ENCODE measurements at regions of chr5 and their contacts with region 1.

Region 1: DNA sequence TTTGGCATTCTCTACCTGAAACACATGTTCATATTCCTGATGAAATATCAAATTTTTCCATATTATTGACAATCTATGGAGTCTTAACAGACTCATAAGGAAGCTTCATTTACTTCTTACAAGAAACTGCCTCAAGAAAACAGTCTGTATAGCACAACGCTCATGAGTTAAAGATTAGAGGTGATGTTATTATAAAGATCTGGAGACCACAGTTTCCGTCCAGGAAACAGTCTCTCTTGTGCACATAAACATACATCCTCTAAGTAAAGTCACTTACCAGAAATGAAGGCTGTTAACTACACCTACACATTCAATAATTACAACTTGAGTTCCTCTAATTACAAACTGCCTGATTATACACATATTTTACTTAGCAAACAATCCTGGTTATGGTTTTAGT is 86.9 kb downstream of the RAPGEF6 start:
- DNase-seq: peak in 4 of 10 donors; percentile 42 to 77 (median 62)
- ATAC-seq: peak; percentile 95 to 99
- H3K4me3 Mint-ChIP-seq: peak overlapping the region; percentile 89 to 100 (median 96)
- H3K27ac Mint-ChIP-seq: peak overlapping the region; percentile 91 to 99 (median 97)
- H3K4me1 Mint-ChIP-seq: peaks cover 32 to 72% (median 67%) of the 10 kb centered on the region in 4 donors
- H3K27me3 Mint-ChIP-seq: no peaks in the 10 kb centered on the region

Region 2: DNA sequence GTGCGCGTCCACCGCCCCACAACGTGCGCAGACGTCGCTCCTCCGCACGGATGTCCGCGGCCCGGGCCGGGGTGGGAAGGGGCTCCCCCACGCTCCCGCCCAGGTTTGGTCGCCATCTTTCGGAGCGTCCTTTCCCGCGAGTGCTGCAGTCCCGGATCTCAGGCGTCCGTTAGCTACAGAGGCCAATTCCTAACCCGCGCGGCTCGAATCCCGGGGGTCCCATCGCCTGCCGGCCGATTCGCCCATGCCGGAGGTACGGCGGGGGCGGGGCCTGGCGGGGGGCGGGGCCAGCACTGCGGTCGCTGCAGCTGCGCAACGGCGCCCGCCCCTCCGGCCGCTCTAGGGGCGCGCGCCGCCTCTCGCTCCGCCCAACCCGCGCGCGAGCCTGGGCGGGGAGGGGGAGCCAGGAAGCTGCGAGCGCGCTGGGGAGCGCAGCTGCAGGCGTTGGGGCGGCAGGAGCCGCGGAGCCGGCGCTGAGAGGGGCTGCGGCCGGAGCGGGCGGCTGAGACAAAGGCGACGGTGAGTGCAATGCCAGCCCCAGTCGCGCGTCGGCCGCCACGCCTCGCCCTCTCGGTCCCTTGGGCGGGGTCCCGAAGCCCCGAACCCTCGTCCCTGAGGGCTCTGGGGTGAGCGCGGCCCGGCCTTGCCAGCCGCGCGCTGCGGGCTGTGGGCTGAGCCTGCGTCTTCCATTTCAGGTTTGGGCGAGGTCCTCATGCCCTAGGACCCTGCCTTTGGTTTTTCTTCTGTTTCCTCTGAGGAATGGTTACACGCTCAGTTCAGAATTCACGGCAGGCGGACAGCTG is 284.3 kb before region 1 on chr5 and contains the start of gene CDC42SE2:
- POLR2A ChIA-PET with region 1: no interaction called
- DNase-seq: peak; percentile 81 to 92 (median 88)
- ATAC-seq: peak; percentile 78 to 84
- H3K4me3 Mint-ChIP-seq: peak within 1 kb of the TSS; percentile 79 to 98 (median 91)
- H3K27ac Mint-ChIP-seq: peak within 1 kb of the TSS; percentile 93 to 98 (median 96)
- H3K4me1 Mint-ChIP-seq: peaks cover 11 to 64% (median 39%) of the 10 kb centered on the region in 4 donors
- H3K27me3 Mint-ChIP-seq: no peaks in the 10 kb centered on the region
- polyA plus RNA-seq, gene CDC42SE2: 423 to 544 (median 480) TPM

Region 3: GRCh38 chr5:131475541-131475941 is 72.6 kb before region 1 on chr5:
- POLR2A ChIA-PET with region 1: no interaction called
- DNase-seq: no peak
- ATAC-seq: no peak
- H3K4me3 Mint-ChIP-seq: no peak overlapping the region
- H3K27ac Mint-ChIP-seq: peak overlapping the region in 5 of 10 donors; percentile 32 to 79 (median 48)
- H3K4me1 Mint-ChIP-seq: peaks cover 8 to 50% (median 30%) of the 10 kb centered on the region in 4 donors
- H3K27me3 Mint-ChIP-seq: no peaks in the 10 kb centered on the region

Region 4: GRCh38 chr5:131533836-131534235 is 14.3 kb before region 1 on chr5:
- POLR2A ChIA-PET with region 1: interaction called, 17 read pairs
- DNase-seq: no peak
- ATAC-seq: peak; percentile 16 to 39
- H3K4me3 Mint-ChIP-seq: peak overlapping the region in 9 of 10 donors; percentile 7 to 86 (median 52)
- H3K27ac Mint-ChIP-seq: peak overlapping the region; percentile 49 to 98 (median 90)
- H3K4me1 Mint-ChIP-seq: peaks cover 31 to 93% (median 75%) of the 10 kb centered on the region in 4 donors
- H3K27me3 Mint-ChIP-seq: no peaks in the 10 kb centered on the region

Measured in naive thymus-derived CD8-positive, alpha-beta T cell (primary cell).